Activated T-helper 1 cell treated with anti-CD3 and anti-CD28 coated beads, Interleukin-12 subunit alpha, Interleukin-12 subunit beta, Interleukin-2, Interleukin-4 antibody, amounts not matched to agents 30 ng/mL and 10 ng/mL and 1 ng/mL, durations not matched to agents 14 hours and 24 hours and 36 hours (primary cell): ENCODE measurements at regions of chr19 and their contacts with region 1.

Region 1: GRCh38 chr19:16111160-16111908 is at the start of gene RAB8A:
- DNase-seq: peak; percentile 99
- H3K4me3 Mint-ChIP-seq: peak within 1 kb of the TSS; percentile 98
- H3K27ac Mint-ChIP-seq: peak within 1 kb of the TSS; percentile 95
- H3K4me1 Mint-ChIP-seq: peaks cover 27% of the 10 kb centered on the region
- H3K27me3 Mint-ChIP-seq: peaks cover 1% of the 10 kb centered on the region
- total RNA-seq, gene RAB8A: 235 and 248 TPM in 2 replicates

Region 2: GRCh38 chr19:15125232-15126067 is 985.9 kb before region 1 on chr19:
- intact Hi-C with region 1: loop called (anchors 1 kb)
- DNase-seq: peak; percentile 97
- H3K4me3 Mint-ChIP-seq: peak overlapping the region; percentile 91
- H3K27ac Mint-ChIP-seq: peak overlapping the region; percentile 98
- H3K4me1 Mint-ChIP-seq: peaks cover 37% of the 10 kb centered on the region
- H3K27me3 Mint-ChIP-seq: no peaks in the 10 kb centered on the region

Region 3: GRCh38 chr19:16070366-16070990 is 40.9 kb before region 1 on chr19:
- intact Hi-C with region 1: loop called (anchors 2 kb)
- DNase-seq: peak; percentile 71
- H3K4me3 Mint-ChIP-seq: peak overlapping the region; percentile 50
- H3K27ac Mint-ChIP-seq: no peak overlapping the region
- H3K4me1 Mint-ChIP-seq: peaks cover 40% of the 10 kb centered on the region
- H3K27me3 Mint-ChIP-seq: no peaks in the 10 kb centered on the region

Region 4: DNA sequence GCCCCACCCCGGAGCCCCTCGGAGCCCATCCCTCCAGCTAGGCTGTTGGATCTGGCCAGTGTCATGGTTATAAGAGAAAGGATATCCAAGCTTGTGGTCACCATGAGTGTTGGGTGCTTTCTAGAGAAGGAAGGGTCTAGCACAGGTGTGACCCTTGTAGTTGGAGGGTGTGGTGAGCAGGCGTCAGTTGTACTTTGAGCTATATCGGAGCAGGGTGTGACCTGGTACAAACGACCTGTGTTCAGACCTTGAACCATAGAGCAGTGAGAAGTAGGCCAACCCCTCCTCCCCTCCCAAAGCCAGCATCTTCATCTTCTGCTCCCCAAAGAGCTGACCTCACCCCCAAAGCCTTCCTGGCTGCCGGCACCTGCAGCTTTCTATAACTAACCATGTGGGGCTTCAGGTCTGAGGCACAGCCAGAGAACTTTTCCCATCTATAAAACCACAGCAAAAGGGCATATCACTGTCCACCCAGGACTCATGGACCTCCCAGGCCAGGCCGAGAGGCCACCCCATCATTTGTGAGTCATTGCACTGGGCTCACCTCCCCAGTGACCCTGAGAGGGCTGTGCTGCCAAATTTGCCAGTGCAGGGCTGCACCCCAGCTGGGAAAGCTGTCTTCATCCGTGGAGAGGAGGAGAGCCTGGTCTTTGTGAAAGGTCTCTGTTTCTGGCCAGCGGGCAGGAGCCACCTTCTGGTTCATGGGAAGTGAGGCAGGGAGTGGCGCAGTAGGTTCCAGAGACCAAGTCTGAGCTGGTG is 14.6 kb after region 1 on chr19:
- intact Hi-C with region 1: no loop called
- DNase-seq: no peak
- H3K4me3 Mint-ChIP-seq: no peak overlapping the region
- H3K27ac Mint-ChIP-seq: peak overlapping the region; percentile 29
- H3K4me1 Mint-ChIP-seq: peaks cover 8% of the 10 kb centered on the region
- H3K27me3 Mint-ChIP-seq: no peaks in the 10 kb centered on the region

Region 5: GRCh38 chr19:16143399-16144245 is 32.3 kb after region 1 on chr19 and contains the start of gene HSH2D:
- intact Hi-C with region 1: loop called (anchors 1 kb)
- DNase-seq: peak; percentile 78
- H3K4me3 Mint-ChIP-seq: peak within 1 kb of the TSS; percentile 98
- H3K27ac Mint-ChIP-seq: peak within 1 kb of the TSS; percentile 97
- H3K4me1 Mint-ChIP-seq: peaks cover 52% of the 10 kb centered on the region
- H3K27me3 Mint-ChIP-seq: no peaks in the 10 kb centered on the region
- total RNA-seq, gene HSH2D: 32.0 and 35.2 TPM in 2 replicates

Region 6: GRCh38 chr19:16197622-16198369 is 86.5 kb after region 1 on chr19 and contains the start of gene AP1M1:
- intact Hi-C with region 1: loop called (anchors 1 kb)
- DNase-seq: peak; percentile 99
- H3K4me3 Mint-ChIP-seq: peak within 1 kb of the TSS; percentile 95
- H3K27ac Mint-ChIP-seq: peak within 1 kb of the TSS; percentile 95
- H3K4me1 Mint-ChIP-seq: peaks cover 51% of the 10 kb centered on the region
- H3K27me3 Mint-ChIP-seq: no peaks in the 10 kb centered on the region
- total RNA-seq, gene AP1M1: 116 and 117 TPM in 2 replicates

Region 7: DNA sequence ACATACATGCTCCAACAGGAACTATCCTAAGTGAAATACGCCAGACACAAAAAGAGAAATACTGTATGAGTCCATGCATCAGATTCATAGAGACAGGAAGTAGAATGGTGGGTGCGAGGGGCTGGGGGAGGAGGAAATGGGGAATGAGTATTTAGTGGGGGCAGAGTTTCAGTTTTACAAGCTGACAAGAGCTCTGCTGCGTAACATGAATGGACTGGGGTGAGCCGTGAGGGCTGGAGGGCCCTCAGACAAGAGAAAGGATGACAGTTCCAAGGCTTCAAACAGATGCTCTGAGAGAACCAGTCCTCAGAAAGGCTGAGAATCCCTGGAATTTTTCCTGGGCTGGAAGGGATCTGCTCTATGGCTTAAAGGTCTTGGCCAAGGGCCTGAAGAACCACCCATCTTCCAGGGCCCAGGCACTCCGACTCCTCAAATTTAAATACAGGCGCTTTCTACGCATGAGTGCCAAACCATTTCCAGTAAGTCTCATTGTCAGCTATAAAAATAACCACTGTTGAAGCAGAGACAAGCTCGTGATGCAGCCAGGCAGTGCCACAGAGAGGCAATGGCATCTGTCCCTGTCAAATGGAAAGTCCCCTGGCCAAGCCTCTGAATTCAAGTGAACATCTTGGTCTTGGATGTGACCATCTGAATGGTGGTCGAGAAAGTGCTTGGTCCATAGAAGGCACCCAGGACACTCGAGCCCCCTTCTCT is 230.8 kb after region 1 on chr19:
- intact Hi-C with region 1: no loop called
- DNase-seq: peak; percentile 52
- H3K4me3 Mint-ChIP-seq: peak overlapping the region; percentile 20
- H3K27ac Mint-ChIP-seq: peak overlapping the region; percentile 56
- H3K4me1 Mint-ChIP-seq: peaks cover 52% of the 10 kb centered on the region
- H3K27me3 Mint-ChIP-seq: peaks cover 3% of the 10 kb centered on the region

Region 8: GRCh38 chr19:16470911-16471811 is 359.8 kb after region 1 on chr19:
- intact Hi-C with region 1: loop called (anchors 1 kb)
- DNase-seq: peak; percentile 22
- H3K4me3 Mint-ChIP-seq: peak overlapping the region; percentile 90
- H3K27ac Mint-ChIP-seq: peak overlapping the region; percentile 72
- H3K4me1 Mint-ChIP-seq: peaks cover 28% of the 10 kb centered on the region
- H3K27me3 Mint-ChIP-seq: no peaks in the 10 kb centered on the region

Region 9: GRCh38 chr19:16542045-16542909 is 430.9 kb after region 1 on chr19 and contains the start of gene CHERP:
- intact Hi-C with region 1: loop called (anchors 1 kb)
- DNase-seq: peak; percentile 94
- H3K4me3 Mint-ChIP-seq: peak within 1 kb of the TSS; percentile 95
- H3K27ac Mint-ChIP-seq: peak within 1 kb of the TSS; percentile 94
- H3K4me1 Mint-ChIP-seq: peaks cover 38% of the 10 kb centered on the region
- H3K27me3 Mint-ChIP-seq: no peaks in the 10 kb centered on the region
- total RNA-seq, gene CHERP: 84.3 and 92.0 TPM in 2 replicates